Motor neuron (in vitro differentiated cells): ENCODE measurements at regions of chr19 and their contacts with region 1.

Region 1: GRCh38 chr19:2663920-2664571 is 38.4 kb downstream of the GNG7 start:
- ATAC-seq: peak in 6 of 8 experiments; percentile 44 to 95 (median 74)
- H3K4me3 ChIP-seq: no peak overlapping the region
- H3K27ac ChIP-seq: no peak overlapping the region
- H3K4me1 ChIP-seq: peaks cover 0 to 9% of the 10 kb centered on the region in 2 donors

Region 2: GRCh38 chr19:2887391-2887914 is 223.4 kb after region 1 on chr19:
- in situ Hi-C with region 1: loop called in 1 of 9 experiments (anchors 25 kb)
- ATAC-seq: peak; percentile 74 to 96 (median 88)
- H3K4me3 ChIP-seq: no peak overlapping the region
- H3K27ac ChIP-seq: no peak overlapping the region
- H3K4me1 ChIP-seq: peaks cover 2 to 3% of the 10 kb centered on the region in 2 donors

Region 3: DNA sequence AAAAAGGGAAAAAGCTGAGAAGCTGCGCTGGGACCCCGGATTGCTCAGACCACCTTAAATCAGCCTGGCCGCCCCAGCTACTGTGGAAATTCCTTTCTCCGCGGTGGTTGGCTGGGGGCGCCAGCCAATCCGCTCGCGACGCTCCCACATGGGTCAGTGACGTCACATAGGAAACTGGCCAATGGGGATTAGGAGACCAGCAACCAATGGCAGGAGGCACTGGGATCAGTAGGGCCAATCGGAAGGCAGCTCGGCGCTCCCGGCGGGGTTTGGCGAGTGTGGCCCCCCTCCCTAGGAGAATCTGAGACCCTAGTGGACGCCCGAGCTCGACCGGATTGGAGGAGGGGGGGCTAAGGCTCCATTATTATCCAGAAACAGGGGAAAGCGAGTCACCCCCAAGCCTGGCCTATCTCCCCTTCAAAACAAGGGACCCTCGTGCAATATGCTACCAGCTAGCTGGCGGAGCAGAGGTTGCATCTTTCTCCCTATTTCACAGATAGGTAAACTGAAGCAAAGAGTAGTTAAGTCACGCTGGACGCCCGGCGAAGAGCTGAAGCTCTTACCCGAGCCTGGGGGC is 371.6 kb after region 1 on chr19:
- in situ Hi-C with region 1: no loop called
- ATAC-seq: peak; percentile 84 to 94 (median 92)
- H3K4me3 ChIP-seq: peak overlapping the region; percentile 15 to 37 (median 33)
- H3K27ac ChIP-seq: peak overlapping the region in 1 of 2 donors; percentile 2
- H3K4me1 ChIP-seq: peaks cover 5 to 12% of the 10 kb centered on the region in 2 donors